ENCODE measurements at regions of chr10 and their contacts with region 1.

Region 1: GRCh38 chr10:28592930-28593329 is 60.0 kb downstream of the WAC start:
- DNase-seq: no peak
- H3K4me3 Mint-ChIP-seq: no peak overlapping the region
- H3K27ac Mint-ChIP-seq: peak overlapping the region; percentile 70
- H3K4me1 Mint-ChIP-seq: peaks cover 40% of the 10 kb centered on the region
- H3K27me3 Mint-ChIP-seq: no peaks in the 10 kb centered on the region

Region 2: GRCh38 chr10:28564905-28565304 is 28.0 kb before region 1 on chr10:
- intact Hi-C with region 1: no loop called
- DNase-seq: no peak
- H3K4me3 Mint-ChIP-seq: no peak overlapping the region
- H3K27ac Mint-ChIP-seq: no peak overlapping the region
- H3K4me1 Mint-ChIP-seq: peaks cover 51% of the 10 kb centered on the region
- H3K27me3 Mint-ChIP-seq: no peaks in the 10 kb centered on the region

Region 3: DNA sequence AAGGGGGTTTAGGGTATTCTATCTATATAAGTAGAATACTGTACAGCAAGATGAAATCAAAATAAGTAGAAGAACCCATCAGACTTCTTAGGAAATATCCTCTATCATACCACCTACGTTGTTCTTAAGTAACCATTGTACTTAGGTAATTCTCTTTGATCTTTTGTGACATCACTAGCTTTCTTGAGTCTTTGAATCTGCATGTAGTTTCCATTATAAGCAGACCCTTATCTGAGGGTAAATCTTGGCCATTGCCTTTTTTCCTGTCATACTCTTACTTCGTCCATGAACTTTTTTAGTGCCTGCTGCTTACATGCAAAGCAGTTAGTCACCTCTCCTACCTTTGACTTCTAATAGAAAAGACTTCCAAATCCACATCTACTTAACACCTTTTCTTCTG is 11.0 kb before region 1 on chr10:
- intact Hi-C with region 1: loop called (anchors 2 kb)
- DNase-seq: no peak
- H3K4me3 Mint-ChIP-seq: no peak overlapping the region
- H3K27ac Mint-ChIP-seq: peak overlapping the region; percentile 81
- H3K4me1 Mint-ChIP-seq: peaks cover 55% of the 10 kb centered on the region
- H3K27me3 Mint-ChIP-seq: no peaks in the 10 kb centered on the region

Region 4: DNA sequence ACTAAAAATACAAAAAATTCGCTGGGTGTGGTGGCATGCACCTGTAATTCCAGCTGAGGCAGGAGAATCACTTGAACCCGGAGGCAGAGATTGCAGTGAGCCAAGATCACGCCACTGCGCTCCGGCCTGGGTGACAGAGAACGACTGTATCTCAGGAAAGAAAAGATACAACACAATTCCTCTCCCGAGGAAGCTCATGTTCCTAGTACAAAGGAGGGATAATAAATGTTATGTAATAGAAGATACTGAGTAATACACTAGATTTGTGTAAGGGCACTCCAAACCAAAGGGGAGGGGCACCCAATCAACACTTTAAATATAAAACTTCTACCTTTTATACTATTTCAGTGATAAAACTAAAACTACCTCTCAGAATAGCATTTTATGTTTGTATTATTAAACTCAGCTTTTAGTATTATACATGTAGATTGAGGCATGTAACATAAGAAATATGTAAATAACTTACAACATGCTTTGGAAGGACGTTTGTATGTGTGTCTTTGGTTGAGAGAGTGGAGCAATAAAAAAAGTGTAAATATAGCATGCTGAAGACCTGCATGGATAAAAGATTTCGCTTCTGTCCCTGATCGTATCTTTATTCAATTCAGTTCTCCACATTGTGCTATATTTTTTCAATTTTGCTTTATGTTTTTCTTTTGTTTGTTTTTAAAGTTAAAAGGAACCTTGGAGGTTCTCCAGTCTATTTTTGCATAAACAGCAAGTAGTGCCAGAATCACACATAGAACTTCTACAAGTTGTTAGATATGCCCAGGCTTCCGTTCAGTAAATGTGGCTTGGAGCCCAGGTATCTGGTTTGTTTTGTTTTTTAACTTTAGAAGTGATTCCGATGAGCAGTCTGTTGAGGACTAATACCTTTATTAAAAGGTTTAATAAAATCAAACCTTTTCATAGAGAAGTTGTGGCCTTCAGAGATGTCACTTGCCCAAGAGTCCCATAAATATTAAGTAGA is 11.9 kb after region 1 on chr10:
- intact Hi-C with region 1: no loop called
- DNase-seq: no peak
- H3K4me3 Mint-ChIP-seq: no peak overlapping the region
- H3K27ac Mint-ChIP-seq: no peak overlapping the region
- H3K4me1 Mint-ChIP-seq: peaks cover 19% of the 10 kb centered on the region
- H3K27me3 Mint-ChIP-seq: no peaks in the 10 kb centered on the region

Region 5: DNA sequence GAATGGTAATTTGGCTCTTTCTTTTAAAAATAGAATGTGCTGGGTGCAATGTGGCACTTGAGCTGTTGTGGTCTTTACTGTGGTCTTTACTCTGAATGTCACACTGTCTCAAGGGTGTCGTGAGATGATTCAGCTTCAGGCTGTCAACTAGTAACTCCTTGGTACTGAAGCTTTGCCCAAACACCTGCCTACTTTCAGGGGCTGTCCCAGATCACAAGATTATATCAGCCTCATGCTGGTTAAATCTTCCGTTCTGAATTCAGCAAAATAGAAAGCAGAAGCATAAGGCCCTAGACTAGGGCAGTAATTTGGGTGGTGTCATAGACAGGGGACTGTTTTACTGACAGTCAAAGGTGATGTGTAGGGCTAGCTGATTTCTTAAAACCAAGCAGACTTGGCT is 195.3 kb after region 1 on chr10:
- intact Hi-C with region 1: no loop called
- DNase-seq: no peak
- H3K4me3 Mint-ChIP-seq: no peak overlapping the region
- H3K27ac Mint-ChIP-seq: no peak overlapping the region
- H3K4me1 Mint-ChIP-seq: peaks cover 10% of the 10 kb centered on the region
- H3K27me3 Mint-ChIP-seq: peaks cover 3% of the 10 kb centered on the region

Measured in activated T-helper 2 cell treated with anti-CD3 and anti-CD28 coated beads, Interferon-gamma antibody, Interleukin-2, Interleukin-4, amounts not matched to agents 10 μg/mL and 5 μg/mL and 100 μg/mL, durations not matched to agents 14 hours and 24 hours and 36 hours (primary cell).